ENCODE measurements at regions of chr5 and their contacts with region 1.

Region 1: DNA sequence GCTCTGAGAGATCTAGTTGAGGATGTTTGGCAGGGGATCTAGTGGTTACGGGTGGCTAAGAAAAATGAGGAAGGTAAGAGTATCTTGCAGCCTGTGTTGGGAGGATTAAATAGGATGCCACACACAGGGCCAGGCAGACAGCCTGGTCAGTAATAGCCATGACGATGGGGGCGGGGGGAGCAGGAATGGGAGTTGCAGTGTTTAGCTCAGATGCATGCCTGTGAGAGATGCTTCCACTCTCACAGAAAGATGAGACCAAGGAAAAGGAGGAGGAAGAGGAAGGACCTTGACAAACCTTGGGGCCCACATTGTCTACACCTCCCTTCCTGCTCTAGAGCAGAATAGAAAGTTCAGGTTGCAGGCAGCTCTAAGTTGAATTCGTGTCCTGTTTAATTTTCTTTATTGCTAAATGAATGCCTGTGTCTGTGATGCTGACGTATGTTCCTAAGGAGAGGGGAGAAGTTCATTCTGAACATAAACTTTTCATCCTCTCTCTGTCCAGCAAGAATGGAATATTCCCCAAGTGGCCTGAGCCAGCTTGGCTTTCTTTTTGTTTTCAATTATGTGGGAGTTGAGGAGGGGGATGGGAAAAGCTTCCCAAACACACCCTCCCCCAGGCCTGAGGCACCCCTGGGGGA is 28.7 kb downstream of the TGFBI start:
- DNase-seq: no peak
- H3K4me3 ChIP-seq: no peak overlapping the region
- H3K27ac ChIP-seq: peak overlapping the region; percentile 77 to 93 (median 84)
- H3K4me1 ChIP-seq: peaks cover 3 to 83% (median 58%) of the 10 kb centered on the region in 4 donors
- H3K27me3 ChIP-seq: no peaks in the 10 kb centered on the region
- CTCF ChIP-seq: no peak
- EP300 ChIP-seq: peak in 3 of 4 donors; percentile 64 to 92 (median 90)
- POLR2A ChIP-seq: no peak

Region 2: GRCh38 chr5:136014049-136015002 is 43.2 kb before region 1 on chr5:
- intact Hi-C with region 1: loop called (anchors 2 kb)
- DNase-seq: peak; percentile 86
- H3K4me3 ChIP-seq: no peak overlapping the region
- H3K27ac ChIP-seq: peak overlapping the region; percentile 47 to 84 (median 75)
- H3K4me1 ChIP-seq: peaks cover 0 to 86% (median 52%) of the 10 kb centered on the region in 4 donors
- H3K27me3 ChIP-seq: no peaks in the 10 kb centered on the region
- CTCF ChIP-seq: no peak
- EP300 ChIP-seq: peak in 3 of 4 donors; percentile 28 to 82 (median 52)
- POLR2A ChIP-seq: no peak